ENCODE measurements at regions of chr19 and their contacts with region 1.

Region 1: DNA sequence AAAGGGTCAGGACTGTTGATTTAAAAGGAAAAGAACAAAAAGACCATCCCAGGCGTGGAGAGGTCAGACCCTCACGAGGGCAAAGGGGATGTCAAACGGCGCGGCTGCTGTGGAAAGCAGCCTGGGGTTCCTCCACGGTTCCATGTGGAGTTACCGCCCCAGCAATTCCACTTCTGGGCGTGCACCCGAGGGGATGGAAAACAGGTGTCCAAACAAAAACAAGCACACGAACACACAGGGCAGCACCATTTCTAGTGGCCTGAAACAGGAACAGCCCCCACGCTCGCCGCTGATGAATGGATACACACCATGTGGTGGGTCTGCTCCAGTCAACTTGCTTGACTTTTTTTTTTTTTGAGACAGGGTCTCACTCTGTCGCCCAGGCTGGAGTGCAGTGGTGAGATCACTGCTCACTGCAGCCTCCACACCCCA is 11.2 kb downstream of the AP3D1 start:
- DNase-seq: no peak
- H3K4me3 ChIP-seq: no peak overlapping the region
- H3K27ac ChIP-seq: no peak overlapping the region
- H3K4me1 ChIP-seq: no peaks in the 10 kb centered on the region
- H3K27me3 ChIP-seq: no peaks in the 10 kb centered on the region
- CTCF ChIP-seq: no peak

Region 2: DNA sequence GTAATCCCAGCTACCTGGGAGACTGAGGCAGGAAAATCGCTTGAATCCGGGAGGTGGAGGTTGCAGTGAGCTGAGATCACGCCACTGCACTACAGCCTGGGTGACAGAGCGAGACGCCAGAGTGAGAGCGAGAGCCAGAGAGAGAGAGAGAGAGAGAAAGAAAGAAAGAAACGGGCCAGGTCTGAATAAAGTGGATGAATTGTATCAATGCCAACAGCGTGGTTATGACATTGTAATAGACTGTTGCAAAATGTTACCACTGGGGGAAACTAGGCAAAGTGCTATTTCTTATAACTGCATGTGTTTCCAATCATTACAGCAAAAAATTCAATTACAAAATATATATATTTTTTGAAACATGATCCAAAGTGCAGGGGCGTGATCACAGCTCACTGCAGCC is 112.8 kb before region 1 on chr19:
- CTCF ChIA-PET with region 1: interaction called, 22 read pairs
- POLR2A ChIA-PET with region 1: no interaction called
- intact Hi-C with region 1: no loop called
- DNase-seq: no peak
- H3K4me3 ChIP-seq: no peak overlapping the region
- H3K27ac ChIP-seq: no peak overlapping the region
- H3K4me1 ChIP-seq: peaks cover 15% of the 10 kb centered on the region
- H3K27me3 ChIP-seq: no peaks in the 10 kb centered on the region
- CTCF ChIP-seq: no peak

Region 3: DNA sequence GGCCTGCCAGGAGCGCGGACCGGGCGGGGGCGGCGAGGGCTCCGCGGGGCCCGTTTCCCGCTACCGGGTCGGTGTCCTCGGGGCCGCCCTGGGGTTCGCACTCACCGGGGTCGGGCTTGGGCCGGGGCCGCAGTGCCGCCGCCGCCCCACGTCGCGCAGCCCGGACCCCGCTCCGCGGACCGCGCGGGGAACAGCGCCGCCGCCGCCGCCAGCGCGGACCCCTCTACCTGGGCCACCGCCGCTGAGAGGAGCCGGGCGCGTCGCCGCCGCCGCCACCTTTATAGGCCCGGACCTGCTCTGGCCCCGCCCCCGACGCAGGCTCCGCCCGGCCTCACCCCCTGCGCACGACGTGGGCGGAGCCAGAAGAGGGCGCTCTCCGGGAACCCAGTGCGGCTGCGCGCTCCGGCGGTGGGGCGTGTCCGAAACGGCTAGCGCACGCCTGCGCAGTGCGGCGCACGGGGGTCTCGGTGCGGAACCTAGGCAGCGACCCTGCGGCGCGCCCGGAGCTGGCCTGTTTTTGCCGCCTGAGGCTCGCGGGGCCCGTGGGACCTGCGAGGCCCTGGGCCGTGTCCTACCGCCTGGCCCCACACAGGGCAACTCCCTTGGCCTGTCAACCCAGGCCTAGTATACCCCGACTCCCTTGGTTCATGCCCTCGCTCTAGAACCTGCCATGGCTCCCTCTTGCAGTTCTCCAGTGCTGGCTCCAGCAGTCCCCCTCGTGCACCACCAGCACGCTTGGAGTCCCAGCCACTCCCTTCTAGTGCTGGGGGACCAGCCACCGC is 89.0 kb before region 1 on chr19 and contains the start of gene MKNK2:
- CTCF ChIA-PET with region 1: no interaction called
- POLR2A ChIA-PET with region 1: no interaction called
- intact Hi-C with region 1: no loop called
- DNase-seq: peak; percentile 46 to 84
- H3K4me3 ChIP-seq: peak within 1 kb of the TSS; percentile 87
- H3K27ac ChIP-seq: peak within 1 kb of the TSS; percentile 55
- H3K4me1 ChIP-seq: peaks cover 21% of the 10 kb centered on the region
- H3K27me3 ChIP-seq: no peaks in the 10 kb centered on the region
- CTCF ChIP-seq: peak; percentile 63
- total RNA-seq, gene MKNK2: 132 and 166 TPM in 2 replicates

Region 4: DNA sequence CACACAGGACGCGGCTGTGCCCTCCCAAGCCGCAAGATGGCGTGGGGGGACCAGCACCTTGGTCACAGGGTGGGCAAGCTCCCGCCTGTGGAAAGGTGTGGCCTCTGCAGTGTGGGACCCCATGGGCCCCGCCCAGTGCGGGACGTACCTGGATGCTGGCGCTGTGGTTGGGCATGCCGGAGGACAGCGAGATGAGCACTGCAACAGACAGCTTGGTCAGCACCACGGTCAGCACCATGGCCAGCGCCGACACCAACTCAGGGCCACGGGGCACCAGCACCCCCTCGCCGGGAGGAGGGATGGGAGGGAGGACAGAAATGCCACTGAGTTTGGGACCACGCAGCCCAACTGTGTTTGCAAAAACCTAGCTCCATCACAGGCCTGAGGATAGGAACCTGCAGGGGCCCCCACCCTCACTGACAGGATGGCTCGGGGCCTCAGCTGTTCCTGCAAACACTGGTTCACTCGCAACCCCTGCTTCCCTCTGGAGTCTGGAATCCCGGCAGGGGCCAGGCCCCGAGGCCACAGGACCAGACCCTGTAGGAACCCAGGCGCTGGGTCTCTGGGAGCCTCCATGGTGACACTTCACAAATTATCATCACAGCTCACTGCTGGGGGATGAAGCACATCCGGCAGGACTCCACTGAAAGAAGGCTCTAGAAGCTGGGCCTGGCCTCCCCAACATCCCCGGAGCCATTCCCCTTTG is 16.3 kb before region 1 on chr19:
- CTCF ChIA-PET with region 1: no interaction called
- POLR2A ChIA-PET with region 1: no interaction called
- intact Hi-C with region 1: no loop called
- DNase-seq: no peak
- H3K4me3 ChIP-seq: no peak overlapping the region
- H3K27ac ChIP-seq: no peak overlapping the region
- H3K4me1 ChIP-seq: no peaks in the 10 kb centered on the region
- H3K27me3 ChIP-seq: no peaks in the 10 kb centered on the region
- CTCF ChIP-seq: no peak

Measured in PC-9 (cell line).